Activated CD4-positive, alpha-beta memory T cell treated with anti-CD3 and anti-CD28 coated beads for 36 hours (primary cell): ENCODE measurements at regions of chr5 and their contacts with region 1.

Region 1: DNA sequence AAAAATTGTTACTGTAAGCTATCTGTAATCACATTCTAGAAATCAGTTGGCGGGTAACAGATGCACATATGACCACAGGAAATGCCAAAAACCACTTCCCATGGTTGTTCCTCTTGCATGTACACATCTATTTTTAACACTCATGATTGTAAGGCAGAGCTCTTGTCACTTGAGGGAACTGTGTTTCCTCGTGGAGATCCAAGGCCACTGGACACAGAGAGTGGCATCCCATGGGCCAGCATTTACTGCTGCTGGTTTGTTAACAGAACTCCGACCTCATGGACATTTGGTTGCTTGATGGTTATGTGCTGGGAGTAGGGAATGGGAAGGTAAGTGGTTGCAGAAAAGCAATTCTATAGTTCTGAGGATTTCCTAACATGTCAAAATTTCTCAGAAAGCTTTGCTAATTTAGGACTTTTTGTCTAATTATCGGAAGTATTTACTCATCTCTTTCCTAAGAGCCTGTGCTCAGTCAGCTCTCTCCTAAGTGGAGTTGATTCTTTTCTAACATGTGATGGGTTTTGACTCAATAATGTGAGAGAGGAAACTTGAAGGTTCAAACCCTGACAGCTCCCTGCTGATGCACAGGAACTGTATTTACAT is 202.0 kb upstream of the NR3C1 start:
- DNase-seq: peak; percentile 52
- H3K4me3 Mint-ChIP-seq: peak overlapping the region; percentile 28
- H3K27ac Mint-ChIP-seq: peak overlapping the region; percentile 86
- H3K4me1 Mint-ChIP-seq: peaks cover 34% of the 10 kb centered on the region
- H3K27me3 Mint-ChIP-seq: peaks cover 3% of the 10 kb centered on the region

Region 2: DNA sequence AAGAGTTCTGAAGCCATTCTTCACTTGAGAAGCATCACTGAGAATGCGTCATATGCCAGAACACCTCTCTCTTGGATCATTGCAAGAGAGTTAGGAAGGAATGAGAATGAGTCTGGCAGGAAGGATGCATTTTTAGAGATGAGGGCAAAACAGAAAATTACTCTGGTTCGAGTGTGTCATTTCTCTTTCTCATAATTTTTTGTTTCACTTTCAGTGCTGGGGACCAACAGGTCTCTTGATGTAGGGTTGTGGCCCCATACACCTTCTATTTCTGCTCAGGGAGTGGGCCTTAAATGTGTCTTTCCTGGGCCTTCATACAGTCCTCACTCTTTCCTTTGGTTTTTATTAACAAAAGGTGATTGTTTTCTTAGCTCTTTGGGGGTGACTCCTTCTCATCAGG is 504.4 kb before region 1 on chr5:
- CTCF ChIA-PET with region 1: no interaction called
- POLR2A ChIA-PET with region 1: no interaction called
- intact Hi-C with region 1: loop called (anchors 5 kb)
- DNase-seq: peak; percentile 23
- H3K4me3 Mint-ChIP-seq: no peak overlapping the region
- H3K27ac Mint-ChIP-seq: peak overlapping the region; percentile 90
- H3K4me1 Mint-ChIP-seq: peaks cover 40% of the 10 kb centered on the region
- H3K27me3 Mint-ChIP-seq: no peaks in the 10 kb centered on the region

Region 3: DNA sequence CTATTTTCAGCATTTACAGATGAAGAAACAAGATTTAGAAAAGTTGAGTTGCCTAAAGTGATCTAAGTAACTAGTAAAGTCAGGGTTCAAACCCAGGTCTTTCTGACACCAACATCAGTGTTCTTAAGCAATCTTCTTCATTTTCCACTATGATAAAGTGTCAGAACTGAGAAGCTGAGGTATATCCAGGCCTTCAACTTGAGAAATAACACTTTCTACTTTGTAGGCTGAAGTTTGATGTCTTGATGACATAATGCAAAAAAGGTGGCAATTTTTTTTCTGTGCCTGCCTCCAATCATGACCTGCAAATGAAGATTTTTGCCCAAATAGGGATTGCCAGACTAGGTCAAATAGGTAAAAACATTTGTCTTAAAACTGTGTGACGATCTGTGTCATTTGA is 283.3 kb before region 1 on chr5:
- CTCF ChIA-PET with region 1: no interaction called
- POLR2A ChIA-PET with region 1: no interaction called
- intact Hi-C with region 1: no loop called
- DNase-seq: no peak
- H3K4me3 Mint-ChIP-seq: no peak overlapping the region
- H3K27ac Mint-ChIP-seq: no peak overlapping the region
- H3K4me1 Mint-ChIP-seq: peaks cover 70% of the 10 kb centered on the region
- H3K27me3 Mint-ChIP-seq: no peaks in the 10 kb centered on the region

Region 4: GRCh38 chr5:143355720-143356119 is 249.8 kb before region 1 on chr5:
- CTCF ChIA-PET with region 1: no interaction called
- POLR2A ChIA-PET with region 1: interaction called, 4 read pairs
- intact Hi-C with region 1: loop called (anchors 5 kb)
- DNase-seq: peak; percentile 50
- H3K4me3 Mint-ChIP-seq: no peak overlapping the region
- H3K27ac Mint-ChIP-seq: no peak overlapping the region
- H3K4me1 Mint-ChIP-seq: peaks cover 75% of the 10 kb centered on the region
- H3K27me3 Mint-ChIP-seq: no peaks in the 10 kb centered on the region

Region 5: DNA sequence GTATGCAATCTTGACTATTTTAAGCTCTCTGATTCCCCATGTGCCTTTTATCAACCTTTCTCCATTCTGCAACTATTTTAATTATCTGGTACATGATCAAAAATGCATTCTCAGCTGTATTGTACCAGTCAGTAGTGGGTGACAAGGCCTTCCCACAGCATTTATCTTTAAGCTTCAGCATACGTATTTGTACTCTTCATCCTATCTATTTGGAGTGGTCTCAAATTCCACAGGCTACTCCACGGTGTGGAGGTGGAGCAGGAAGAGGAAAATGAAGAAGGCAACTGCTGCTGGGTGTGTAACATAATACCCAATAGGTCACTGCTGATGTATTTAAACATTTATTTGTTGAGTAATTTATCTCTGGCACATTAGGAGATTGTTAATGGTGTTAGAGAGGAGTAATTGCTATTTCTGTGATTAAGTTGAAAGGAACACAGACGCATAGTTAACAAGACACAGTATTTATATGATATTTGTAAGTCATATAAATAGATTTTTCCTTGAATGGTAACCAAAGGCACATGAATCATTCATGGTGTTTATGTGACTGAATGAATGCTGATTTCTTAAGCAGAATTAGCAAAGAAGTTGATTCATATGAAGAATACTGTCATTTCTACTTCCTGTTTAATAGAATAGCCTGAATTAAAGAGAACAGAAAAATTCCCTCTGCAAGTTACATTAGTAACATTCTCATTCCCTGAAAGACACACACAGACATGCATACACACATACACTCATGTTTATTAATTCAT is 48.3 kb before region 1 on chr5:
- CTCF ChIA-PET with region 1: interaction called, 3 read pairs
- POLR2A ChIA-PET with region 1: no interaction called
- intact Hi-C with region 1: loop called (anchors 1 kb)
- DNase-seq: no peak
- H3K4me3 Mint-ChIP-seq: no peak overlapping the region
- H3K27ac Mint-ChIP-seq: peak overlapping the region; percentile 9
- H3K4me1 Mint-ChIP-seq: peaks cover 16% of the 10 kb centered on the region
- H3K27me3 Mint-ChIP-seq: no peaks in the 10 kb centered on the region

Region 6: DNA sequence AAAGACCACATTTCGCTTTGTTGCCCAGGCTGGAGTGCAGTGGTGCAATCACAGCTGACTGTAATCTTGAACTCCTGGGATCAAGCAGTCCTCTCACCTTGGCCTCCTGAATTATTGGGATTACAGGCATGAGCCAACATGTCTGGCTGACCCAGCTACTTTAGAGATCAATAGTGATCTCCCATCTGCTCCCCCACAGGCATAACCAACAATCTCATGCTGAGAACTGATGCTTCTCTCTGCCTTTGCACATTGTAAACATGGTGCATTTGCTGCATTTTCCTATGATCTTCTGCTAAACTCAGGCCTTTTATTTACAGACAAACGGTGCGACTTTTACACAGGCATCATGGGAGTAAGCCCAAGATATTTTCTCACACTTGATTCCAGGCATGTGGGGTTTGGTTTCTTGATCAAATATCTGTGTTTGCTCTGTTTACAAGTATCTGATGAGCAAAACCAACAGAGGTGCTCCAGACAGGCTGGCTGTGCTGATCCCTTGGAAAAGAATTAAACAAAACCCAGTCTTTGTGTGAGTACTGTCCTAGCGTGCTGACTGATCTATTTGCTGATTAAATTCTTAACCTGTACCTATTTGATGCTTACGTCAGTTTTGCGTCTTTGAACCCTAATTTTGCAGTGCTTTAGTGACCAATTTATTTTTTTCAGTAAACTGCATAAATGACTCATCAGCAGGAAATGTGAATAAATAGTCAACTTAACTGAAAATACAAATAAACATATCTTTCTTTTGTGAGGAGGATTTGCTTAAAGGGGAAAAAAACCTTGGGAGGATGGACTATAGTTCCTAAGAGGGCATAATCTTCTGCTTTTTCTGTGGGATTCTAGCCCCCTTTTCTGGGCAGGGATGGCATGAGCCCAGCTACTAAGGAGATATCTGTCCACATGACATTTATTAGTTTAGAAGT is 10.3 kb before region 1 on chr5:
- CTCF ChIA-PET with region 1: no interaction called
- POLR2A ChIA-PET with region 1: no interaction called
- intact Hi-C with region 1: loop called (anchors 1 kb)
- DNase-seq: no peak
- H3K4me3 Mint-ChIP-seq: no peak overlapping the region
- H3K27ac Mint-ChIP-seq: peak overlapping the region; percentile 3
- H3K4me1 Mint-ChIP-seq: peaks cover 22% of the 10 kb centered on the region
- H3K27me3 Mint-ChIP-seq: peaks cover 1% of the 10 kb centered on the region

Region 7: DNA sequence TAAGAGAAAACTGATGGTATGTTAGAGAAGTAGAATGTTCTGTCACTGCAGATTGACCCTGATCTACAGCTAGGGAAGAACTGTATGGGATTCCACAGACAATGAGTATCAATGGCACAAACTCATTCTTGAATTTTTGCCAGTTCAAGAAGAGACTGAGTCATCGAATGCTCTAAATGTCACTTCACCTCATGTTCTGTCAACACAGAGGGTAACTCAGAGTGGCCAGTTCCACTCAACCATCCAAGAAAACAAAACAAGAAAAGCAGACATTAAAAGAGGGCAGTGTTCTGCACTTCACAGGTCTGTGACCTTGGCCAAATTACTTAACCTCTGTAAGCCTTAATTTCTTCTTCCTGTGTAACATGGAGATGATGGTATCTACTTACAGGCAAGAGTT is 74.3 kb after region 1 on chr5:
- CTCF ChIA-PET with region 1: no interaction called
- POLR2A ChIA-PET with region 1: no interaction called
- intact Hi-C with region 1: loop called (anchors 1 kb)
- DNase-seq: no peak
- H3K4me3 Mint-ChIP-seq: no peak overlapping the region
- H3K27ac Mint-ChIP-seq: no peak overlapping the region
- H3K4me1 Mint-ChIP-seq: peaks cover 23% of the 10 kb centered on the region
- H3K27me3 Mint-ChIP-seq: peaks cover under 1% of the 10 kb centered on the region

Region 8: GRCh38 chr5:143791848-143792731 is 186.6 kb after region 1 on chr5:
- CTCF ChIA-PET with region 1: no interaction called
- POLR2A ChIA-PET with region 1: no interaction called
- intact Hi-C with region 1: no loop called
- DNase-seq: no peak
- H3K4me3 Mint-ChIP-seq: no peak overlapping the region
- H3K27ac Mint-ChIP-seq: no peak overlapping the region
- H3K4me1 Mint-ChIP-seq: peaks cover 6% of the 10 kb centered on the region
- H3K27me3 Mint-ChIP-seq: peaks cover 2% of the 10 kb centered on the region